Common myeloid progenitor, CD34-positive (primary cell): ENCODE measurements at regions of chr19 and their contacts with region 1.

Region 1: GRCh38 chr19:54148158-54148919 is 10.8 kb downstream of the CNOT3 start:
- DNase-seq: no peak
- H3K4me3 ChIP-seq: no peak overlapping the region
- H3K27ac ChIP-seq: no peak overlapping the region
- H3K4me1 ChIP-seq: no peaks in the 10 kb centered on the region
- H3K27me3 ChIP-seq: no peaks in the 10 kb centered on the region

Region 2: GRCh38 chr19:54159352-54160181 is 11.2 kb after region 1 on chr19 and contains the start of gene LENG1:
- CTCF ChIA-PET with region 1: interaction called, 11 read pairs
- POLR2A ChIA-PET with region 1: interaction called, 5 read pairs
- DNase-seq: peak; percentile 100
- H3K4me3 ChIP-seq: peak within 1 kb of the TSS; percentile 54 to 94 (median 83)
- H3K27ac ChIP-seq: peak within 1 kb of the TSS; percentile 70 to 90
- H3K4me1 ChIP-seq: peaks cover 5 to 58% (median 43%) of the 10 kb centered on the region in 4 experiments
- H3K27me3 ChIP-seq: peaks cover 0 to 10% (median 0%) of the 10 kb centered on the region in 5 experiments